Endothelial cell of umbilical vein (primary cell): ENCODE measurements at regions of chr13 and their contacts with region 1.

Region 1: GRCh38 chr13:52652196-52652979 is at the start of gene SUGT1:
- DNase-seq: peak; percentile 98
- H3K4me3 ChIP-seq: peak within 1 kb of the TSS; percentile 67 to 100 (median 100)
- H3K27ac ChIP-seq: peak within 1 kb of the TSS; percentile 84
- H3K4me1 ChIP-seq: peaks cover 22% of the 10 kb centered on the region
- H3K27me3 ChIP-seq: no peaks in the 10 kb centered on the region
- CTCF ChIP-seq: peak; percentile 59 to 71
- POLR2A ChIP-seq: peak; percentile 95
- total RNA-seq, gene SUGT1: 74.2 and 78.8 TPM in 2 replicates

Region 2: DNA sequence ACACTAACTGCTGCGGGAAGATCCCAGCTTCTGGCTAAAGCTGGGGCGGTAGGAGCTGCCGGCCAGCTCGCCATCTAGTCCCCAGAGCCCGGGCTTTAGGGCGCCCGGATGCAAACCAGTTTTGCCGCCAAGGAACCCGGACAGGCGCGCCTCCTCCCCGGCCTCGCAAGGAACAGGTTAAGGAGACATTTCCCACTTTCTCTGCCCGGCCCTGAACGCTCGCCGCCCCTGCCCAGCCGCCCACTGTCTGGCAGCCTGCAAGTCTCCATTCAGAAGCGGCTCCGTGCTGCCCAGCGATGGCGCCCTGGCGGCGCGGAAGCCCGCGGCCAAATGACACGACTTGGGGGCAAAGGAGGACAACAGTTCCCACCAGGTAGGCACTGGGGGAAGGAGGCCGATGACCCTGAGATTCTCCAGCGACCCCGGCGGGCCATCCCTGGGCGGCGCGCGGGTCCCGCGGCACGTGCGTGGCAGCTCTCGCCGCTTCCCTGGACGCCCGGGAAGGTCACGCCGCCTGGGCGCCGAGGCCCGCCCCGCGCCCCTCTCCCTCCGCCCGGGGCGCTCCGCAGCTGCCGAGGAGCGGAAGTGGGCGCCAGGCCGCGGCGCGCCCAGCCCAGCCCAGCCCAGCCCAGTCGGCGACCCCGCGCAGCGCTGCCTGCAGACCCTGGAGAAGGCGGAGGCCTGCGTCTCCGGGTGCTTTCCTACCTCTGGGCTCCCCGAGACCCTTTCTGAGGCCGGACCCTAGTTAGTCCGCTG is 52.4 kb before region 1 on chr13:
- CTCF ChIA-PET with region 1: interaction called, 8 read pairs
- POLR2A ChIA-PET with region 1: no interaction called
- dilution Hi-C with region 1: no loop called
- intact Hi-C with region 1: loop called (anchors 1 kb)
- DNase-seq: peak; percentile 40
- H3K4me3 ChIP-seq: peak overlapping the region; percentile 54 to 81 (median 68)
- H3K27ac ChIP-seq: peak overlapping the region; percentile 93
- H3K4me1 ChIP-seq: peaks cover 23% of the 10 kb centered on the region
- H3K27me3 ChIP-seq: no peaks in the 10 kb centered on the region
- CTCF ChIP-seq: no peak
- POLR2A ChIP-seq: peak; percentile 39

Region 3: DNA sequence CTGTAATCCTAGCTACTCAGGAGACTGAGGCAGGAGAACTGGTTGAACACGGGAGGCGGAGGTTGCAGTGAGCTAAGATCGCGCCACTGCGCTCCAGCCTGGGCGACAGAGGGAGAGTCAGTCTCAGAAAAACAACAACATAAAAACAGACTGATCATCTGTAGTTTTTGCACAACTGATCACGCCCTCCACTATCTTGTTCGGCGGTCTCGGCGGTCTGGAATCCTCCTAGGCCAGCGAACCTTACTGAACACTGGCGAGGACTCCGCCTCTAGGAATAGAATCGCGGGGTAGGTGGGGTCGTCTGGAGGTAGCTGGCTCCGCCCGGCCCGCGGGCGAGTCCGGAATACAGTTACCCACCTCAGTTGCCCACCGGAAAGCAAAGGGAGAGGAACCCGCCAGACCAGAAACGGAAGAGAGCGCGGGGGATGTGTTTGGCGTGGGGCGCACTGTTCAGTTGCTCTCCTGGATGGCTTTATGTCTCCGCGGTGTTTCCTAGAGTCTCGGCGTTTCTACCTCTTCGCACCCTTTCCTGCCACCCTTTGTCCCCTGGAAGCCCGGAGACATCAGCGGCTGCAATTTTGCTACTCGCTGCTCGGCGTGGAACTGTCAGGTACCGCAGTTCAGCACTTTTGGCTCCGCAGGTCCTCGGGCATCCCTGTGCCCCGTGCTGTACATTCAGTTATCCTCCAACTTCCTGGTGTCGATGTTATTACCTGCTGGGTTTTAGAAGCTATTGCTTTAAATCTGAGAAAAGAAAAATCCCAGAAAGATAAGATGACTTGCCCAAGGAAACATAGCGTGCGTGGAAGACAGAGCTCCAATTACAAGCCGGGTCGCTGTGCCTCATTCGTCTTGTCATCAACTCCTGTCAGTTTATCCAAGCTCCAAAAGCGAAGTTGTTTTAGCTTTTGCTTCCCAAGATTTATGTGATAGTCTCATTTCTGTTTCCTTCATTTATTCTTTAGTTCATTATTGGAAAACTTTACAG is 35.0 kb before region 1 on chr13:
- CTCF ChIA-PET with region 1: interaction called, 24 read pairs
- POLR2A ChIA-PET with region 1: interaction called, 14 read pairs
- dilution Hi-C with region 1: no loop called
- intact Hi-C with region 1: loop called (anchors 1 kb)
- DNase-seq: peak; percentile 62
- H3K4me3 ChIP-seq: peak overlapping the region; percentile 45 to 98 (median 94)
- H3K27ac ChIP-seq: peak overlapping the region; percentile 61
- H3K4me1 ChIP-seq: peaks cover 12% of the 10 kb centered on the region
- H3K27me3 ChIP-seq: no peaks in the 10 kb centered on the region
- CTCF ChIP-seq: no peak
- POLR2A ChIP-seq: peak; percentile 65

Region 4: DNA sequence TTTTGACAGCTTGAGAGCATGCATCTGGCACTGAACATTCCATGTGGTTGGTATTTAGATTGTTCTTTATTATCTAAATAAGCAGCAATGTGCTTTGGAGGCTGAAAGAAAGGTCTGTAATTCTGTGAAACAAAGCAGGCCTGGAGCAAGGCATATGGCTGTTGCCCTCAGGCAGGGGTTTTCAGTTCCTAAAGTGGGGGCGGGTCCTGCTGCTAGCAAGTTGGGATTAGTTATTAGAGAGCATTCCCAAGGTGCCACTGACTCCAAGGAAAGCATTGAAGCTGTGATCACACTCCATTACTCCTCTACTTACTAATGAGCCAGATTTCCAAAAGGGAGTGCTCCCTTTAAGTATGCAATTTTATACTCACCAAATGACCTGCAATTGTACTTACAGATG is 808.4 kb after region 1 on chr13:
- CTCF ChIA-PET with region 1: no interaction called
- POLR2A ChIA-PET with region 1: no interaction called
- dilution Hi-C with region 1: no loop called
- intact Hi-C with region 1: no loop called
- DNase-seq: no peak
- H3K4me3 ChIP-seq: no peak overlapping the region
- H3K27ac ChIP-seq: no peak overlapping the region
- H3K4me1 ChIP-seq: no peaks in the 10 kb centered on the region
- H3K27me3 ChIP-seq: no peaks in the 10 kb centered on the region
- CTCF ChIP-seq: no peak
- POLR2A ChIP-seq: no peak